ENCODE measurements at regions of chr3 and their contacts with region 1.

Region 1: DNA sequence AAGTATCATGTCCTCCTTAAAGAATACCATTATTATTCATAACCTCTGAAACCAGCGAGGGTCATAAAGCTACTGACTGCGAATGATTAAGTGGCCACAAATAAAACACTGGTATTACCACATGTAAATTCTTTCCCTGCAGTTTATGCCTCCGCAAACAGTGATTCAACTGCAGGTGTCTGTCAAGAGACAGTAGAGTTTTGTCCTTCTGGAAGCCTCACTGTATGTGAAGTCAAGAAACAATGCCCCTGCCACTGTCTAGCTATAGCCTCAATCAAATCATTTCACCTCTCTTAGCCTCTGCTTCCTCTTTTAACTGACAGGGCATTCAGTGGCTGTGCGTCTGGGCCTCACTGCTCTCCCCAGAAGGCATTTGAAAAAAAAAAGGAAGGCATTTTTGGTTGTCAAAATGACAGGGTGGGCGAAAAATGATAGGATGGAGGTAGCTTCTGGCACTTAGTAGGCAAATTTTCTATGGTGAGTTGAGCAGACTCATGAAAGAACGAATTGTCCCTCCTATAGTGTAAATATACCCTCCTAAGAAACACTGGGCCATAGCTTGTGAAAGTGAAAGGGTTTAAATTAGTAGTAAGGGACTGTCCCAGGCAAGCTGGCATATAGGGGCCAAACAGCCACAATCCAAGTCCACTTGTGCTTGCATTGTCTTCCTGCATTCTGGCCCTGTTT is 66.7 kb downstream of the FILIP1L start:
- DNase-seq: peak; percentile 82
- ATAC-seq: peak; percentile 67
- H3K4me3 ChIP-seq: peak overlapping the region; percentile 16 to 47 (median 34)
- H3K4me3 Mint-ChIP-seq: peak overlapping the region; percentile 89
- H3K27ac ChIP-seq: peak overlapping the region; percentile 75 to 82
- H3K27ac Mint-ChIP-seq: peak overlapping the region; percentile 97
- H3K4me1 ChIP-seq: peaks cover 59 to 60% of the 10 kb centered on the region in 2 donors
- H3K4me1 Mint-ChIP-seq: peaks cover 63% of the 10 kb centered on the region
- H3K27me3 ChIP-seq: no peaks in the 10 kb centered on the region
- H3K27me3 Mint-ChIP-seq: no peaks in the 10 kb centered on the region
- CTCF ChIP-seq: no peak

Region 2: DNA sequence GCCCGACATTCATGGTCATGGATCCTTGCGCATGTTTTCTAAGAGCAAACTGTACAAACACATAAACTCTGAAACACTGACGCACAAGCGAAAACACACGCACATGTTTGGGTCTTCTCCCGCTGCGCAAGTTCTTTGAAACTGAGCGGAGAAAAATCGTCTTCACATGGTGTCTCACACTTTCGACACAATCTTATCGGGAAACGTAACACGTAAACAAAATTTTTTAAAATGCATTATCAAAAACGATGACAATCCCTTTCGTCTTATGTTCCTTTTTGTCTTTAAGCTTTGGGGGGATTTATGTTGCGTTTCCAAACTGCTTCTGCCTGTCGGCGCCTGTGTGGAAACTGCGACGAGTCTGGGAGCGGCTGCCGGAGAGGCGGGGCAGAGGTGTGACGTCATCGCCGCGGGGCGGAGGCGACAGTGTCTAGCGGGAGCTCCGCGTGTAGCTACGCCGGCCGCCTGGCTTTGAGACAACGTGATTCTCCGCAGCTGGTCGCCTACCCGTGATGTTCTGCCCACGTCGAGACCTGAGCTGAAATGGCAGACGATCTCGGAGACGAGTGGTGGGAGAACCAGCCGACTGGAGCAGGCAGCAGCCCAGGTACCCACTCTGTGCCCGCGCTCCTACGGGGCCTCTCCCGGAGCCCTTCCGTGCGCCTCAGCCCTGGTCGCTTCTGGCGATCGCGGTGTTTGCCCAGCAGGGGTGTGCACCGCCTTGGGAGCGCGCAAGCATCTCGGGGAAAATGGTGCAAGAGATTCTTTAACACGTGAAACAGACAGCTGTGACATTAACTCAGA is 230.0 kb before region 1 on chr3 and contains the start of gene CMSS1:
- CTCF ChIA-PET with region 1: no interaction called
- POLR2A ChIA-PET with region 1: no interaction called
- intact Hi-C with region 1: loop called (anchors 5 kb)
- DNase-seq: peak; percentile 98
- ATAC-seq: peak; percentile 91
- H3K4me3 ChIP-seq: peak within 1 kb of the TSS; percentile 71 to 99 (median 89)
- H3K4me3 Mint-ChIP-seq: peak within 1 kb of the TSS; percentile 99
- H3K27ac ChIP-seq: peak within 1 kb of the TSS; percentile 85 to 91
- H3K27ac Mint-ChIP-seq: peak within 1 kb of the TSS; percentile 100
- H3K4me1 ChIP-seq: peaks cover 16 to 17% of the 10 kb centered on the region in 2 donors
- H3K4me1 Mint-ChIP-seq: peaks cover 39% of the 10 kb centered on the region
- H3K27me3 ChIP-seq: no peaks in the 10 kb centered on the region
- H3K27me3 Mint-ChIP-seq: no peaks in the 10 kb centered on the region
- CTCF ChIP-seq: no peak
- total RNA-seq, gene CMSS1: 22.0 and 22.8 TPM in 2 replicates

Region 3: DNA sequence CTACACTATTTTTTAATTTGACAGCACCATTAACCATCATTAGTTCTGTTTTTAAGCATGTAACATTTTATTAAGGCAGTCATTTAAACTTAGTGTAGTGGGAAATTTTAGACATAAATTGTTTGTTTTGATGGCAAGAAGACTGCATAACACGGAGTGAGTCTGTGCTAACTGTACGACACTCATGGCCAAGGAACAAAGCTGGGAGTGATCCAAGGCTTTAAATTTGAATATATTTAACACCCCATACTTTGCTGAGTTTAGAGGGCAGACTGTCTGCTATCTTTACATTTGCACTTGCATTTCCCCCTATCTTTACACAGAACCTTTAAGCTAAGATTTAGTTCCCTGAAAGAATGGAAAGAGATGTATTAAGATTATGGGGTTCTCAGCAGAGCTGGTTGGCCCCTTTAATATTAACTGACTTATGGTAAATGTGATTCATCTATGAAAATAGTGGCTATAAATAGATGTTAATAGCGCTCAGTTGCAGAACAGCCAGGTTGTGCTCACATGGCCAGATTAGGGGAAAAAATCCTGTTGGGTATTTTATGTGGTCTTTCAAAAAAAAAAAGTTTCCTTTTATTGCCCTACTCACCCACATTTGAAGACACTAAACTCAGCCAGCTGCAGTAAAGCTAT is 109.2 kb before region 1 on chr3:
- CTCF ChIA-PET with region 1: no interaction called
- POLR2A ChIA-PET with region 1: no interaction called
- intact Hi-C with region 1: loop called (anchors 5 kb)
- DNase-seq: no peak
- ATAC-seq: no peak
- H3K4me3 ChIP-seq: peak overlapping the region in 1 of 5 experiments; percentile 28
- H3K4me3 Mint-ChIP-seq: peak overlapping the region; percentile 72
- H3K27ac ChIP-seq: no peak overlapping the region
- H3K27ac Mint-ChIP-seq: peak overlapping the region; percentile 42
- H3K4me1 ChIP-seq: peaks cover 12 to 14% of the 10 kb centered on the region in 2 donors
- H3K4me1 Mint-ChIP-seq: peaks cover 26% of the 10 kb centered on the region
- H3K27me3 ChIP-seq: no peaks in the 10 kb centered on the region
- H3K27me3 Mint-ChIP-seq: no peaks in the 10 kb centered on the region
- CTCF ChIP-seq: no peak

Region 4: GRCh38 chr3:100254168-100254777 is 206.7 kb after region 1 on chr3:
- CTCF ChIA-PET with region 1: interaction called, 11 read pairs
- POLR2A ChIA-PET with region 1: no interaction called
- intact Hi-C with region 1: no loop called
- DNase-seq: peak; percentile 64
- ATAC-seq: peak; percentile 58
- H3K4me3 ChIP-seq: no peak overlapping the region
- H3K4me3 Mint-ChIP-seq: no peak overlapping the region
- H3K27ac ChIP-seq: no peak overlapping the region
- H3K27ac Mint-ChIP-seq: no peak overlapping the region
- H3K4me1 ChIP-seq: no peaks in the 10 kb centered on the region
- H3K4me1 Mint-ChIP-seq: no peaks in the 10 kb centered on the region
- H3K27me3 ChIP-seq: no peaks in the 10 kb centered on the region
- H3K27me3 Mint-ChIP-seq: no peaks in the 10 kb centered on the region
- CTCF ChIP-seq: peak; percentile 65